IMR-90 (cell line): ENCODE measurements at regions of chr14 and their contacts with region 1.

Region 1: DNA sequence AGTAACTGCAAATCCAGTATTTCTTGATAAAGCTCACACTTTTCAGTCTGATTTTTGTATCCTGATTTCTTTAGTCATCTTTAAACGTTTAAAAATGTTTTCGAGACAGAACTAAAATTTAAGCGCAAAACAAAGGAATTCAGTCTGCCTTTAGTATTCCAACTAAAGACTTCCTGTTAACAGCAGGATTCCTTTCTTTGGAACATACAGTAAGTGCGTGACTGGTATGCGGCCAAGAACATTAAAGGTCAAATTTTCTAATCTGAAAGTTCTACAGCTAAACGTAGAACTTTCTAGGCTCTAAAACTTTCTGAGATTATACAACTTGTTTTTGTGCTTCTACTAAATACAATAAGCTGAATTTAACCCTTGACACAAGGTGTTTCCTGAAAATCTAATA is 9.9 kb downstream of the SAV1 start:
- DNase-seq: peak; percentile 72
- ATAC-seq: peak; percentile 71
- H3K4me3 ChIP-seq: no peak overlapping the region
- H3K27ac ChIP-seq: peak overlapping the region; percentile 83; the same call in 1 of the 2 replicates
- H3K4me1 ChIP-seq: peaks cover 3% of the 10 kb centered on the region; the same call in 1 of the 2 replicates
- H3K27me3 ChIP-seq: no peaks in the 10 kb centered on the region
- CTCF ChIP-seq: no peak
- POLR2A ChIP-seq: no peak
- RAD21 ChIP-seq: no peak

Region 2: GRCh38 chr14:50171895-50172294 is 486.3 kb before region 1 on chr14:
- CTCF ChIA-PET with region 1: no interaction called
- POLR2A ChIA-PET with region 1: no interaction called
- dilution Hi-C with region 1: no loop called
- in situ Hi-C with region 1: no loop called
- intact Hi-C with region 1: no loop called
- DNase-seq: peak; percentile 2
- ATAC-seq: peak; percentile 72
- H3K4me3 ChIP-seq: no peak overlapping the region
- H3K27ac ChIP-seq: no peak overlapping the region
- H3K4me1 ChIP-seq: peaks cover 2% of the 10 kb centered on the region; the same call in 1 of the 2 replicates
- H3K27me3 ChIP-seq: no peaks in the 10 kb centered on the region
- CTCF ChIP-seq: no peak
- POLR2A ChIP-seq: no peak
- RAD21 ChIP-seq: no peak

Region 3: GRCh38 chr14:50937325-50937724 is 279.1 kb after region 1 on chr14:
- CTCF ChIA-PET with region 1: no interaction called
- POLR2A ChIA-PET with region 1: no interaction called
- dilution Hi-C with region 1: no loop called
- in situ Hi-C with region 1: no loop called
- intact Hi-C with region 1: loop called (anchors 10 kb)
- DNase-seq: peak; percentile 80
- ATAC-seq: peak; percentile 61
- H3K4me3 ChIP-seq: no peak overlapping the region
- H3K27ac ChIP-seq: no peak overlapping the region
- H3K4me1 ChIP-seq: peaks cover 3% of the 10 kb centered on the region; the same call in 1 of the 2 replicates
- H3K27me3 ChIP-seq: no peaks in the 10 kb centered on the region
- CTCF ChIP-seq: no peak
- POLR2A ChIP-seq: no peak
- RAD21 ChIP-seq: no peak

Region 4: DNA sequence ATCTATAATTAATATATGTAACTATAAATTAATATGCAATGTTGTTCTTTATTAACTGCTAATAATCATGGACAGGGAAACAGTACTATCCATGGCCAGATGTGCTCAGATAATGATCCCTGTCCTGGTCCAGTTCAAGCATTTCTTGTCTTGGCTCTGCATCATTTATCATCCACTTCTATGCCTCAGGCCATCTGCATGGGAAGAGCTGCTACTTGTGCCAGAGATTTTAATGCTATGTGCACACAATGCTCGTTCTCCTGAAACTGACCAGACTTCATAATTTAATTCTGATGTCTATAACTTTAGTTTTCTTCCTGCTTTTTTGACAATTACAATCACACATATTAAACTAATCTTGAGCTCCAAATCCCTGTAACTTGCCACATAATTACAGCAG is 570.7 kb after region 1 on chr14:
- CTCF ChIA-PET with region 1: no interaction called
- POLR2A ChIA-PET with region 1: no interaction called
- dilution Hi-C with region 1: no loop called
- in situ Hi-C with region 1: no loop called
- intact Hi-C with region 1: no loop called
- DNase-seq: no peak
- ATAC-seq: no peak
- H3K4me3 ChIP-seq: no peak overlapping the region
- H3K27ac ChIP-seq: no peak overlapping the region
- H3K4me1 ChIP-seq: peaks cover 7% of the 10 kb centered on the region
- H3K27me3 ChIP-seq: peaks cover 12% of the 10 kb centered on the region
- CTCF ChIP-seq: no peak
- POLR2A ChIP-seq: no peak
- RAD21 ChIP-seq: no peak